MCF 10A (cell line): ENCODE measurements at regions of chr5 and their contacts with region 1.

Region 1: GRCh38 chr5:149646564-149646963 is 65.3 kb downstream of the ARHGEF37 start:
- DNase-seq: peak; percentile 77
- H3K4me3 Mint-ChIP-seq: no peak overlapping the region
- H3K27ac Mint-ChIP-seq: no peak overlapping the region
- H3K4me1 Mint-ChIP-seq: peaks cover 5% of the 10 kb centered on the region
- H3K27me3 Mint-ChIP-seq: no peaks in the 10 kb centered on the region
- CTCF ChIP-seq: no peak

Region 2: DNA sequence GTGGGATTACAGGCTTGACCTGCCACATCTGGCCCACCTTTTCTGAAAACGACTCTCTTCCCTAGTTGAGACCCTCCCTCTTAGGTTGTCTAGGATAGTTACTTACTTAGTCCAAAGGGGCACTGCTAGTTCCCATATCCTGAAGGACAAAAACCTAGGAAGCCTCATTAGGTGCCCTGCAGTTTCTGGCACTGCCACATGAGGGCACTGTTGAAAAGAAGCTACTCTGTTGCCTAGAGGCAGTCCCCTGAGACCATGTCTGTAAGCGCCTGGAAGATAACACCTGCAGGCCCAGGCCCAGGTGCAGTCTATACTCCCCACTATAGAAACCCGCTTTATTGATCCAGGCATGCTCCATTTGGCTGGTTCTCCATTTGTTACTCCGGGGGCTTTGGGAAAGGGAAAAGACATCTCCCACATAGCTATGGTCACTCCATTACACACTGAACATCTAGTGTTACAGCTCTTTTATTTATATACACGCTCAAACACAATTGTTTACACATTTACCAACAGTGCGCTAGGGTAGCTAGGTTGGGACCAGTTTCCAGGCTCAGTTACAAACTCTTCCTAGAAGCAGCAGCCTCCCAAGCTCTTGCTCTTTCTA is 10.1 kb after region 1 on chr5:
- CTCF ChIA-PET with region 1: interaction called, 13 read pairs
- POLR2A ChIA-PET with region 1: interaction called, 6 read pairs
- intact Hi-C with region 1: no loop called
- DNase-seq: peak; percentile 80
- H3K4me3 Mint-ChIP-seq: no peak overlapping the region
- H3K27ac Mint-ChIP-seq: no peak overlapping the region
- H3K4me1 Mint-ChIP-seq: no peaks in the 10 kb centered on the region
- H3K27me3 Mint-ChIP-seq: peaks cover 21% of the 10 kb centered on the region
- CTCF ChIP-seq: peak; percentile 85